ENCODE measurements at regions of chr2 and their contacts with region 1.

Region 1: GRCh38 chr2:47402805-47403608 is at the start of gene MSH2:
- DNase-seq: peak; percentile 95
- H3K4me3 Mint-ChIP-seq: peak within 1 kb of the TSS; percentile 90
- H3K27ac Mint-ChIP-seq: peak within 1 kb of the TSS; percentile 97
- H3K4me1 Mint-ChIP-seq: peaks cover 40% of the 10 kb centered on the region
- H3K27me3 Mint-ChIP-seq: no peaks in the 10 kb centered on the region
- total RNA-seq, gene MSH2: 42.7 to 43.3 TPM

Region 2: DNA sequence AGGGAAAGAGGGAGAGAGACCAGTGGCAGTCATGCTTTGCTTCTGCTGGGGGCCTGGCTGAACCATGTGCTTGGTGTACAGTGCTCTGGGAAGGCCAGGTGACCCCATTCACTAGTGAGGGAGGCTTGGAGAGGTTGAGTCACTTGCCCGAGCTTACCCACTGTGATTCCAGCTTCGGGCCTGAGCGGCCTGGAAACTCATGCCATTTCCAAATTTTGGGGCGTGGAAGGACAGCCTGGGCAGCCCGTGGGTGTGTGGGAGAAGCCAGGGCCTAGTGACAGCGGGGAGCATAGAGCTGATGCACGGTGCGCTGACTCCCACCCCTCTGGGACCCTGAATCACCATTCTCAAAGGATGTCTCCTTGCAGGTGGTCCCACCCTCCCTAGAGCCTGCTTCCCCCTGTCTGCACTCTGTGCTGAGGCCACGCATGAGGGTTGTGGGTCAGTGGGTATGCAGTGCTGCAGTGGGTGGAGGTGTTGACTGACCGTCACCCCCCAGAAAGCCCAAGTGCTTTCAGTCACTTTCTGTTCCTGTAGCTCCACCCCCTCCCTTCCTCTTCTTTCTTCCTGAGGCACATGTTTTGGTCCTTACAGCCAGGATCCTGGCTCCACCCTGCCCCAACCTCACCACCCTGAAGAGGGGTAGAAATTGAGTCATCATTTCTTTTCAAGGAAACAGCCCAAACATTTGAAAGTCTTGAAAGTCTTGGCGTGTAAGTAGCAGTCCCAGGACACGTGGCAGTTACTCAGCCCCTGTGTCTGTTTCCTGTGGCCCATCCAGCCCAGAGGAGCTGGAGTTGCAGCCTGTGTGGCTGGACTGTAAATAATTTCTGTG is 418.1 kb before region 1 on chr2:
- CTCF ChIA-PET with region 1: no interaction called
- intact Hi-C with region 1: loop called (anchors 2 kb)
- DNase-seq: peak; percentile 84
- H3K4me3 Mint-ChIP-seq: peak overlapping the region; percentile 8
- H3K27ac Mint-ChIP-seq: peak overlapping the region; percentile 92
- H3K4me1 Mint-ChIP-seq: peaks cover 69% of the 10 kb centered on the region
- H3K27me3 Mint-ChIP-seq: no peaks in the 10 kb centered on the region

Region 3: DNA sequence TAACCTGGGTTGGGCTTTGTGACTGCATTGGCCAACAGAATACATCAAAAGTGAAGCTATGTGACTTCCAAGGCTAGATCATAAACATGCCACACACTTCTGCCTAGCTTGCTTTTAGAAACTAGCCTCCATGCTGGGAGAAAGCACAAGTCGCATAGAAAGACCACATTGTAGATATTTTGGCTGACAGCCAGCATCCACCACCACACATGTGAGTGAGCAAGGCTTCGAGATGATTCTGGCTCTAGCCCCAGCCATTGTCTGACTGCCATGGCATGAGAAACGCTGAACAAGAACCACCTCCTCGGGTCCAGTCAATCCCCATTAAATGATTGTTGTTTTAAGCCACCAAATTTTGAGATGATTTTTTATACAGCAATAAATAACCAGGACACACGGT is 181.1 kb before region 1 on chr2:
- CTCF ChIA-PET with region 1: no interaction called
- intact Hi-C with region 1: no loop called
- DNase-seq: no peak
- H3K4me3 Mint-ChIP-seq: no peak overlapping the region
- H3K27ac Mint-ChIP-seq: no peak overlapping the region
- H3K4me1 Mint-ChIP-seq: no peaks in the 10 kb centered on the region
- H3K27me3 Mint-ChIP-seq: no peaks in the 10 kb centered on the region

Region 4: GRCh38 chr2:47520825-47521665 is 118.0 kb after region 1 on chr2:
- CTCF ChIA-PET with region 1: no interaction called
- intact Hi-C with region 1: loop called (anchors 1 kb)
- DNase-seq: peak; percentile 83
- H3K4me3 Mint-ChIP-seq: peak overlapping the region; percentile 82
- H3K27ac Mint-ChIP-seq: peak overlapping the region; percentile 72
- H3K4me1 Mint-ChIP-seq: peaks cover 10% of the 10 kb centered on the region
- H3K27me3 Mint-ChIP-seq: no peaks in the 10 kb centered on the region